Endothelial cell of umbilical vein (primary cell): ENCODE measurements at regions of chr10 and their contacts with region 1.

Region 1: DNA sequence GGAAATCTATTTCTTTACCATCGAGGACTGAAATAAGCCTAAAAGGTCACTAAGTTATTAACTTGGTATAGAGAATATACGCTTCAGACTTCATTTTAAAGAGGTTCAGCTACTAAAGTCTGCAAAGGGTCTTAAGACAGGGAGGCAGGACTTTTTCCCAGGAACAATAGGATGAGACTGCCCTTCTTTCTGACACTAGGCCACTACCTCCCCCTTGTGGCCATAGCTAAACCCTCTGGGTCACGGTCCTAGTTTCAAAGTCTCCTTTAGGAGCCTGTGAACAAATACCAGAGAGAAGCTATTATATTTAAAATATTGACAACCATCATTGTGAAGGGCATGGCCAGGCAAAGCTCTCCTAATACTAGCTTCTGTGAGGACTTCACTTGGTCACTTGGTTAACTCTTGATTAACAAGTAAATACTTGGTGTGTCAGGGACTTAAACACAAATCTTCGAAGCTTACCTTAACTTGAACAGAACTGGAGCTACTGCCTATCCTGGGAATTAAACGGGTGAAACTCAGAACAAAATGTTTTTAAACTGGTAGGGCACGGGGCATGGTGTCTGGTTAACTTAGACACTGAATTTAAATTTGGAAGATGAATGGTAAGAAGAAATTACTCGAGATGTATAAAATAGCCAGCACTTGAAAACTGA is 75.6 kb downstream of the CCDC6 start:
- DNase-seq: peak; percentile 68
- H3K4me3 ChIP-seq: no peak overlapping the region
- H3K27ac ChIP-seq: no peak overlapping the region
- H3K4me1 ChIP-seq: peaks cover 5% of the 10 kb centered on the region
- H3K27me3 ChIP-seq: no peaks in the 10 kb centered on the region
- CTCF ChIP-seq: peak; percentile 74 to 88
- POLR2A ChIP-seq: no peak

Region 2: DNA sequence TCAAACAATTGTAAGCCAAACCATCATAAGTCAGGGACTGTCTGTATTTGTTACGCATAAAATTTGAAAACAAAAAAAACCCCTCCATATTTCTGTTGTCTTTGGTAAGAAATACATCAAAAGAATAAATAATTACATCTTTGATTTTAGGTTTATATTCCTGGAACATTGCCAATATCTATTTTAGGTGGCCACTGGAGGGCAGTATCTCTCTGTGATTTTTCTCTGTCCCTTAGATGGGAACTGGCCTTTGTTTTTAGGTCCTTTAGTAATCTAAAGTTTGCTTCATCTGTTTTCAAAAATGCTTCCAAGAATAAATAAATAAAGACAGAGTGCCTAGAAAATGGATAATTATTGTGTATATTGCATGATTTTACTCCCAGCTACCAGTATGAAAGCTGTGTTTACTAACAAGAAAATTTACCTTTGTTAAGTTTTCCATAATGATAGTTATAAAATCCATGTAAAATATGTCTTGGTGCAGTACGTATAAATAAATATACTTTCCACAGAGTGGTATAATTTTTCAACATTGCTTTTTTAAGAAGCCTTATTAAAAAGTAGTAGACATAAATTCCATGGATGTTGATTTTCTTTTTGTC is 590.0 kb before region 1 on chr10:
- CTCF ChIA-PET with region 1: no interaction called
- POLR2A ChIA-PET with region 1: no interaction called
- dilution Hi-C with region 1: no loop called
- intact Hi-C with region 1: loop called (anchors 10 kb)
- DNase-seq: peak; percentile 52
- H3K4me3 ChIP-seq: no peak overlapping the region
- H3K27ac ChIP-seq: no peak overlapping the region
- H3K4me1 ChIP-seq: no peaks in the 10 kb centered on the region
- H3K27me3 ChIP-seq: no peaks in the 10 kb centered on the region
- CTCF ChIP-seq: peak; percentile 18 to 22
- POLR2A ChIP-seq: no peak

Region 3: DNA sequence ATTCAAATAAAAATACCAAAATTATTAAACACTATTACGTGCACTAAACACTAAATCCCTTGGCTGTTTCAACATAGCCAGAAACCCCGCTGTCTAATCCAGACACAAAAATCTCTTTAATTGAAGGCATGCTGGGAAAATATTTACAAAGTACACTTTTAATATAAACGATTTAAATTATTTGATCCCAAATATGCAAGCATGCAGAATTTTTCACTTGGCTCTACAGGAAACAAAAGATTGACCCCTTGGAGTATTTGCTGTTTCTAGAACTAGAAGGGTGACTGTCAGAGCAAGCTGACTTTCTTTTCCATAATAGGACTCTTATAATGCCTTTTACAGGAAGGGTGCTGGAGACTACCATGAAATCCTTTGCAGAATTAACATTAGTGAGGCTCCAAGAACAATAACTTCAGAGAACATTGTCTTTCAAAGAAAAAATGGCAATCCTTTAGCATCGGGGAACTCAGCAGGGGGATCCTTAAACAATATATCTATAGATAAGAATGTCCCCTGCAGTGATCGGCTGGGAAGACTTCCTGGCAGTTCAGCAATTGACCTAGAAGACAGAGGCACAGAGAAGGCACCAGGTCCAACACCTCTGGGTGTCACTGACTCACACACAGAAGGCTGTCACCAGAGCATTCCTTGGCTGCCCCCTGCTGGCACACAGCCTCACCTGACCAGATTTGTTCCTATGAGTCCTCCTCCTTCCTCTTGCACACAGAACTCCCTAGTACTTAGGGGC is 21.7 kb before region 1 on chr10:
- CTCF ChIA-PET with region 1: interaction called, 15 read pairs
- POLR2A ChIA-PET with region 1: no interaction called
- dilution Hi-C with region 1: no loop called
- intact Hi-C with region 1: no loop called
- DNase-seq: peak; percentile 71
- H3K4me3 ChIP-seq: no peak overlapping the region
- H3K27ac ChIP-seq: no peak overlapping the region
- H3K4me1 ChIP-seq: no peaks in the 10 kb centered on the region
- H3K27me3 ChIP-seq: no peaks in the 10 kb centered on the region
- CTCF ChIP-seq: peak; percentile 70 to 82
- POLR2A ChIP-seq: no peak

Region 4: GRCh38 chr10:59844436-59844835 is 13.7 kb after region 1 on chr10:
- CTCF ChIA-PET with region 1: interaction called, 32 read pairs
- POLR2A ChIA-PET with region 1: no interaction called
- dilution Hi-C with region 1: no loop called
- intact Hi-C with region 1: no loop called
- DNase-seq: no peak
- H3K4me3 ChIP-seq: no peak overlapping the region
- H3K27ac ChIP-seq: no peak overlapping the region
- H3K4me1 ChIP-seq: no peaks in the 10 kb centered on the region
- H3K27me3 ChIP-seq: no peaks in the 10 kb centered on the region
- CTCF ChIP-seq: no peak
- POLR2A ChIP-seq: no peak

Region 5: DNA sequence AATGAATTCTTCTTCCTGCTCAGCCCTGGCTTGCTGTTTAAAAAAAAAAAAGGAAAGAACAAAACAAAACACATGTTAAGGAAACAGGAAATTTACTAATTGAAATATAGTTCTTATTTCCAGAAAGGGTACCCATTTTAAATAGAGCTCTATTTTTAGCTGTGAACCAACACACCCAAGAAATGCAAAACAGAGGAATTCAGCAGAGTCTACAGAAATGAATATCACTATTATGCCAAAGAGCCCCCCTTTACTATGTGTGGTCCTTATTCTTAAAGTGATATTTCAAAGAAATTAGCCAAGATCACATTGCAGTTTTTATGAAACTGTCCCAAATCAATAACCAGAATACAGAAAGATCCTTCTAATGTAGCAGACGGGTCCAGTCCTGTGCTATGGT is 21.9 kb after region 1 on chr10:
- CTCF ChIA-PET with region 1: interaction called, 10 read pairs
- POLR2A ChIA-PET with region 1: no interaction called
- dilution Hi-C with region 1: no loop called
- intact Hi-C with region 1: no loop called
- DNase-seq: peak; percentile 30
- H3K4me3 ChIP-seq: no peak overlapping the region
- H3K27ac ChIP-seq: no peak overlapping the region
- H3K4me1 ChIP-seq: peaks cover 6% of the 10 kb centered on the region
- H3K27me3 ChIP-seq: no peaks in the 10 kb centered on the region
- CTCF ChIP-seq: no peak
- POLR2A ChIP-seq: no peak

Region 6: GRCh38 chr10:59906417-59907202 is 75.9 kb after region 1 on chr10 and contains the start of gene CCDC6:
- CTCF ChIA-PET with region 1: interaction called, 34 read pairs
- POLR2A ChIA-PET with region 1: interaction called, 3 read pairs
- dilution Hi-C with region 1: no loop called
- intact Hi-C with region 1: loop called (anchors 1 kb)
- DNase-seq: peak; percentile 96
- H3K4me3 ChIP-seq: peak within 1 kb of the TSS; percentile 68 to 81 (median 77)
- H3K27ac ChIP-seq: peak within 1 kb of the TSS; percentile 75
- H3K4me1 ChIP-seq: peaks cover 32% of the 10 kb centered on the region
- H3K27me3 ChIP-seq: no peaks in the 10 kb centered on the region
- CTCF ChIP-seq: peak; percentile 64 to 82
- POLR2A ChIP-seq: peak; percentile 75
- total RNA-seq, gene CCDC6: 36.8 TPM in 2 replicates

Region 7: DNA sequence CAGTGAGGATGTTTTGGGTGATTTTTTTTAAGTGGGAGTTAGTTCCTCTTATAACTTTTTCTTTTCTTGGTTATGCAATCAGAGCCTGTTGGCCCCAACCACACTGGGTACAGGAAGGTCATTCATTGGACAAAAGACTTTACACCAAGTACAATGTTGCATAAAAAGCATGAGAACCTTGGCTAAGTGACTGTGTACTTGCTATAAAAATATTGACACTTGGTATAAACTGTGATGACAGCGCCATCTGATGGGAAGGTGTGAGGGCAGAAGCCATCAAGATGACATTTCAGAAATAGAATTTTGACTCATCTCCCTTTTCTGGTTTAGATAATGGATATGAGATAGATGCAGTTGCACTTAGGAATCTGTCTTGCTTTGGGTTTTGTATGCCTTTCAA is 202.0 kb after region 1 on chr10:
- CTCF ChIA-PET with region 1: interaction called, 7 read pairs
- POLR2A ChIA-PET with region 1: no interaction called
- dilution Hi-C with region 1: no loop called
- intact Hi-C with region 1: loop called (anchors 5 kb)
- DNase-seq: peak; percentile 56
- H3K4me3 ChIP-seq: no peak overlapping the region
- H3K27ac ChIP-seq: no peak overlapping the region
- H3K4me1 ChIP-seq: no peaks in the 10 kb centered on the region
- H3K27me3 ChIP-seq: no peaks in the 10 kb centered on the region
- CTCF ChIP-seq: peak; percentile 40 to 42
- POLR2A ChIP-seq: no peak